ENCODE measurements at regions of chr1 and their contacts with region 1.

Region 1: DNA sequence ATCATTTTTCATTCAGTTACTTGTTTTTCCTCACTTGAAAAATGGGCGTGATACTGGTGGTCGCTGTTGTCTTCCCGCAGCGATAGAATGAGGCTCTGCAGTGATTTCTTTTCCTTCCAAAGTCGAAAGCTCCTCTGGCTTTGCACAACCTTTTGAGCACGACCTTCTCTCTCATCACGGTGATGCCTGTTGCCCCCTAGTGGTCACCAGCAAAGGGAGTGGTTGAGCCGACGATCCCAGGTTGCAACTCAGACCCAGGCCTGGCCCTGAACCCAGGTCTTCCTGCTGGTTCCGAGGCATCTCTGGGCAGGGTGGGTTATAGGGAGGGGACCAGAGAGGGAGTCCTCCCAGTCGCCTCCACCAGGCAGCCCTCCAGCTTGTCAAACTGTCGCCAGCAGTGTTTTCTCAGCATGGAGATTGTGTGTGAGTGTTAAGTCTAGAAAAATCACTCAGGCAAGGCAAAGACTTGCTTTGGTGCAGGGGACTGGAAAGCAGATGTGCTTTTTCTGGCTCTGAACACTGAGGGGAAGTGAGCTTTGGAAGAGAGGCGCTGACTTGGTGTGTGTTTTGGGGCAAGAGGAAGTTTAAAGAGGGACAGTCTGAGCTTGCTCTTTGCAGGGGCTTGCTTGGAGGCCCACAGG is 285.3 kb downstream of the CAMTA1 start:
- DNase-seq: no peak

Region 2: GRCh38 chr1:6794164-6794563 is 276.3 kb before region 1 on chr1:
- intact Hi-C with region 1: loop called (anchors 5 kb)
- DNase-seq: no peak

Region 3: GRCh38 chr1:6898974-6899539 is 171.5 kb before region 1 on chr1:
- intact Hi-C with region 1: loop called (anchors 5 kb)
- DNase-seq: no peak

Region 4: DNA sequence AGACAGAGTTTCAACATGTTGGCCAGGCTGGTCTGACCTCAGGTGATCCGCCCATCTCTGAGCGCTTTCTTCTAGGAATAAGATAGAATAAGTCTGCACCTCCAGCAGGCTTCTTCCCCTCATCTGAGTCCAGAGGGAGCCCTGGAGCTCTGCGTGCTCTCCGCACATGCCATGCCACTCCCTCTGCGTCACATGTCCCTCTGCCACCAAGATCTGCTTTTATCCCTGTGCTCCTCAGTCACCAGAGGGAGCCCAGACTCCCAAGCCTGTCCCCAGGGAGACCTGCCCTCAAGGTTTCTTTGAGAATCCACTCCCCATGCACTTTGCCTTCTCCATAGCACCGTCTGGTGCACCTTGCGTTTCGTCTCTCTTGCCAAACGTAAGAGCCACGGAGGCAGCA is 72.2 kb before region 1 on chr1:
- intact Hi-C with region 1: loop called (anchors 1 kb)
- DNase-seq: peak; percentile 73

Region 5: GRCh38 chr1:7013833-7014639 is 56.5 kb before region 1 on chr1:
- intact Hi-C with region 1: no loop called
- DNase-seq: peak; percentile 85

Region 6: GRCh38 chr1:7110321-7110720 is 39.8 kb after region 1 on chr1:
- intact Hi-C with region 1: no loop called
- DNase-seq: no peak

Region 7: DNA sequence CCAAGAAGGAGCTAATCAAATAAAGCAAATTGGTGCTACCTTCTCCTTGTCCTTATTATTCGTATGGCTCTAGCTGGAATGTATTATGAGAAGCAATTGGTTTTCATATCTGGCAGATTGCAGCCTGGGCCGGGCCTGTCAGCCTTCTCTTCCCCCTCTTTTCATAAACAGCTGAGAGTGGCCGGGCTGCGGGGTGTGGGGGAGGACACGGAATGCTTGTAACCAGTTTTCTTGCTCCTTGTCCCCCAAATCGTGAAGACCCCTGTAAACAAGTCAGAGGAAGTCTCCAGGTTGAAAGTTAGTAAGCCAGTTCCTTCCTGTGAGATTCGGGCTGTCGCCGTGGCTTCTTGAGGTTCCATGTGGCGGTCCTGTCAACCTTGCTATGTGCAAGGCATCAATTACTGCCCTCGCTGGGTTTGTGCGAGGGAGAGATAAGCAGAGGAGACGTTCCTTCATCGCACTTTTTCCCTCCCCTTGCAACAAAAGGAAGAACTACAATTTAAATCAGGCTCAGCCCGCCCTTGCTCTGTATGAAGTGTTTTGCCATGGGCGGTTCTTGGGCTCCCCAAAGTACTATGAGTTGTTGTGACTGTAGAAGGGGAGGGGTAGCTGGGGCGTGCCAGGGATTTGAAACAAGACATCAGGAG is 165.5 kb after region 1 on chr1:
- intact Hi-C with region 1: no loop called
- DNase-seq: no peak

Region 8: GRCh38 chr1:7373876-7374562 is 303.5 kb after region 1 on chr1:
- intact Hi-C with region 1: no loop called
- DNase-seq: peak; percentile 69